Activated B cell treated with CpG ODN at 0.5 μM for 24 hours (primary cell): ENCODE measurements at regions of chr7 and their contacts with region 1.

Region 1: DNA sequence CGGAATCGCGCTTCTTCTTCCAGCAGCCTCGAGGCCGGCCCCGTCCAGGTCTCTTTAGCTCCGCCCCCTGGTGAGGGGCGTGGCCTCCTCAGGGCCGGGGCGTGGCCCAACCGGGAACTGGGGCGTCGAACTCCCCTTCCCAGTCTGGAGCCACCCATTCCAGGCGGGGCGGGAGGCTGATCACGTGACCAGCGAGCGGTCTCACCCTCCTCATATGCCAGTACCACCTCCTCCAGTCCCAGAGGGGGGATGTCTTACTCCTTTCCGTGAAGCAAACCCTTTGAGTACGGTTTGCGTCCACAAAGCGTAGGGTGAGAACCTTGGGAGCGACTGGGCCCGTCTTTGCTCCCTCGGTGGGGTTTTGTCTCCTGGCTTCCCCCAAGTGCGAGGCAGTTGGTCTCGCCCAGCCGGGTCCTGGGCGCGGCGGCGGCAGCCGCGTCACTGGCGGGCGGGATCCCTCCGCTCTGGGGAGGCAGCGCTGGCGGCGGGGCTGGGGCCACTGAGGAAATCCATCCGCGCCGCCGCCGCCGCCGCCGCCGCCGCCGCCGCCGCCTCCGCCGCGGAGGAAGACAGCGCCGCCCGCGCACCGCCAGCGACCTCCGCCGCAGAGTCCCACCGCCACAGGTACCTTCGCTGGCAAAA is at the start of gene GNB2:
- DNase-seq: peak; percentile 99
- ATAC-seq: peak; percentile 67
- H3K4me3 Mint-ChIP-seq: peak within 1 kb of the TSS; percentile 97
- H3K27ac Mint-ChIP-seq: peak within 1 kb of the TSS; percentile 95
- H3K4me1 Mint-ChIP-seq: peaks cover 11% of the 10 kb centered on the region
- H3K27me3 Mint-ChIP-seq: no peaks in the 10 kb centered on the region
- CTCF ChIP-seq: no peak
- total RNA-seq, gene GNB2: 129 and 132 TPM in 2 replicates

Region 2: DNA sequence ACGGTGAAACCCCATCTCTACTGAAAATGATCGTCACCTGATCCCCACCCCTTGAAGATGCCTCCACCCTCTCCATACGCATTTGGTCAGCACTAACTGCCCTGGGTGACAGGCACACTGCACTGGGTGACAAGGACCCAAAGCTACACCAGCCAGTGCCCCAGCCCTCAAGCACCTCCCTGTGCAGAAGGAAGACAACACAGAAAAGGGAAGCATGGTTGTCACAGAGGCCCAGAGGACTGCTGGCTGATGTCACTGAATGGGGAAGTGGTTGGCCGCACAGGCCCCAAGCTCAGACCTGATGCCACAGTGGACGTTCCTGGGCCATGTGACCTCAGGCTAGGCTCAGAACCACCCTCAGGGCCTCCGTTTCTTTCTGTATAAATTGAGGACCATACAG is 304.3 kb before region 1 on chr7:
- CTCF ChIA-PET with region 1: no interaction called
- POLR2A ChIA-PET with region 1: no interaction called
- intact Hi-C with region 1: loop called (anchors 1 kb)
- DNase-seq: peak; percentile 69
- ATAC-seq: peak; percentile 80
- H3K4me3 Mint-ChIP-seq: peak overlapping the region; percentile 44
- H3K27ac Mint-ChIP-seq: peak overlapping the region; percentile 91
- H3K4me1 Mint-ChIP-seq: peaks cover 92% of the 10 kb centered on the region
- H3K27me3 Mint-ChIP-seq: no peaks in the 10 kb centered on the region
- CTCF ChIP-seq: no peak

Region 3: DNA sequence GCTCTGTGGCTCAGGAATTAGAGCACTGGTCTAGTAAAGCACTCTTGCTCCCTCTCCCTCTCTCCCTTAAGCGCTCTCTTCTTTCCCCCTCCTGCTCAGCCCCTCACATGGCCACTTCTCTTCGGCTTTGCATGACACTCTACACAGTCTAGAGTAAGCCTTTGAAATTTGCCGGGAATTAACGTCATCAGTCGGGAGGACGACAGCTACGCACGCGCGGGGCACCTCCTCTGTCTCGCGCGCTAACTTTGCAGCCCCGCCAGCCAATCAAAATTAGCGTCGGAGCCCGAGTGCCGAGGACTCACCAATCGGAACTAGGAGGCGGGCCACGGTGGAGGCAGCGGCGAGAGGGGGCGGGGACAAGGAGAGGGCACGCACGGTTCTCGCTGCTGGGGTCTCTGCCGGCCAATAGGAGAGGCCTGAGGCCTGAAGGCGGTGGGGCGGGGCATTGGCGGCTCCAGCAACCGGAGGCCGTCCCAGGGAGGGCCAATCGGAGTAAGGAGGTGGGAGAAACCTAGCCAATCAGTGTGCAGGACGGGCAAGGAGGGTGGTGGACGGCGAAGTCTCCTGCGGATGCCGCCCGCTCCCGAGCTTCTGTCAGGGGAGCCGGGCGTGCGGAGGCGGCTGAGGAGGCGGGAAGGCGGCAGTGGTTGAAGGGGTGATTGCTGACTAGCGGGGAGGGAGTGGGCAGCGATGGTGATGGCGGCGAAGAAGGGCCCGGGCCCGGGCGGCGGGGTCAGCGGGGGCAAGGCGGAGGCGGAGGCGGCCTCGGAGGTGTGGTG is 134.6 kb before region 1 on chr7 and contains the start of gene AGFG2:
- CTCF ChIA-PET with region 1: no interaction called
- POLR2A ChIA-PET with region 1: no interaction called
- intact Hi-C with region 1: loop called (anchors 1 kb)
- DNase-seq: peak; percentile 97
- ATAC-seq: peak; percentile 98
- H3K4me3 Mint-ChIP-seq: peak within 1 kb of the TSS; percentile 100
- H3K27ac Mint-ChIP-seq: peak within 1 kb of the TSS; percentile 87
- H3K4me1 Mint-ChIP-seq: peaks cover 32% of the 10 kb centered on the region
- H3K27me3 Mint-ChIP-seq: no peaks in the 10 kb centered on the region
- CTCF ChIP-seq: no peak
- total RNA-seq, gene AGFG2: 9.5 and 10.8 TPM in 2 replicates

Region 4: GRCh38 chr7:100611974-100612729 is 61.3 kb before region 1 on chr7 and contains the start of gene MOSPD3:
- CTCF ChIA-PET with region 1: interaction called, 3 read pairs
- POLR2A ChIA-PET with region 1: interaction called, 10 read pairs
- intact Hi-C with region 1: no loop called
- DNase-seq: peak; percentile 99
- ATAC-seq: peak; percentile 91
- H3K4me3 Mint-ChIP-seq: peak within 1 kb of the TSS; percentile 99
- H3K27ac Mint-ChIP-seq: peak within 1 kb of the TSS; percentile 100
- H3K4me1 Mint-ChIP-seq: peaks cover 19% of the 10 kb centered on the region
- H3K27me3 Mint-ChIP-seq: no peaks in the 10 kb centered on the region
- CTCF ChIP-seq: no peak
- total RNA-seq, gene MOSPD3: 10.5 and 11.9 TPM in 2 replicates

Region 5: DNA sequence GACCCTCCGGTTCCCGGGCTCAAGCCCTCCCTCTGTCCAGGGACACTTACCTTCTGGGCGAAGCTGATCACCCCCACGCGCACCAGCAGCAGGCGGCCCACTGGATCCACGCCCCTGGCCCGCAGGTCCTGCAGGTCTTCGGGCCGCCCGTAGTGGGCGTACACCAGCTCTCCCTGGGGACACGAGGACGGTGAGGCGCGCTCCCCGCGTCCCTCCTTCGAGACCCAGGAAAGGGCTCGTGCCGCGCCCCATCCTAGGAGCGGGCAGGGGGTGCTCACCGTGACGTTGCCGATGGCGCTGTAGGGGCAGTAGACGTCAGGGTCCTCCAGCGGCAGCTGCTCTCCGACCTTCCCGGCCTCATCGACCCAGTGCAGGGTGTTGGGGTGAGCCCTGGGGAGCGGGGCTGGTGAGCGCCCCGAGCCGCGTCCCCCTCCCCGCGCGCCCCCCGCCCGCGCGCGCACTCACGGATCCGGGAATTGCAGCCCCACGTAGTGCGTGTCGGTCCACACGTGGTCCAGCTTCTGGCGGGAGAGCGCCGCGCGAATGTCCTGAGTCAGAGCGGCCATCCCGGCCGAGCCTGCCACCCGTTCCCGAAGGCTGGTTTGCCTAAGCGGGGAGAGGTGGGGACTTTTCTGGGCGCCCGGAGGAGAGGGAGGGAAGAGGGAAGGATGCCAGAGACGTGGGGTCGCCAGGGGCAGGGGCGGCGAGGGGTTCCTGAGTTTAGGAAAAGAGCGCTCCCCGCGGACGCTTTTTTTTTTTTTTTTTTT is 40.3 kb before region 1 on chr7:
- CTCF ChIA-PET with region 1: interaction called, 8 read pairs
- POLR2A ChIA-PET with region 1: interaction called, 8 read pairs
- intact Hi-C with region 1: loop called (anchors 1 kb)
- DNase-seq: peak; percentile 63
- ATAC-seq: peak; percentile 71
- H3K4me3 Mint-ChIP-seq: peak overlapping the region; percentile 89
- H3K27ac Mint-ChIP-seq: peak overlapping the region; percentile 78
- H3K4me1 Mint-ChIP-seq: peaks cover 4% of the 10 kb centered on the region
- H3K27me3 Mint-ChIP-seq: no peaks in the 10 kb centered on the region
- CTCF ChIP-seq: no peak

Region 6: DNA sequence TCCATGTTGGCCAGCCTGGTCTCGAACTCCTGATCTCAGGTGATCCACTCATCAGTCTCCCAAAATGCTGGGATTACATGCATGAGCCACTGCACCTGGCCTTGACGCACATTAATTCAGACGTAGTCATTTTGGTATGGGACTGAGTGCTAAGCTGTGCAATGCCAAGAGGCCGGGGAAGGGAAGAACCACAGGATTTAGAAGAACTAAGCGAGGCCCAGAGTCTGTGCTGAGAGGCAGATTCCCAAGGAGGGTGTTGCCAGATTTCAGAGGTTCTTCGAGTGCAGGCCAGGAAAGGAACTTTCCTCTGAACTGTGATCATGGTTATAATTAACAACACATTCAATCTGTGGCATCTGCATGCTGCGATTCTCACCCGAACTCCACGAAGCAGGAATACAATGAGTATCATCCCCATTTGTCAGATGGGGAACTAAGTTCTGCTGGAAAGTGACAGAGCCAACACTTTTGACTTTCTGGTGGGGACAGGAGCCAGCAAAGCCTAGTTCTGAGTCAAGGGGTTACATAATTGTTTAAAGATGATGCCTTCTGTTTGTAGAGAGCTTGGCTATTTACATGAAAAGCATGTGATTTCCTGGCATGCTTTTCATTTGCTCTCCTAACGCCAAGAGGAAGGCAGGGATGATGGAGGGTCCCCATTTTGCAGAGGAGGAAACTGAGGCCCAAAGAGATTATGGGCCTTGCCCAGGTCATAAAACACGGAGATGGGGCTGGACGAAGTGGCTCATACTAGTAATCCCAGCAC is 53.8 kb after region 1 on chr7:
- CTCF ChIA-PET with region 1: no interaction called
- POLR2A ChIA-PET with region 1: no interaction called
- intact Hi-C with region 1: no loop called
- DNase-seq: no peak
- ATAC-seq: no peak
- H3K4me3 Mint-ChIP-seq: no peak overlapping the region
- H3K27ac Mint-ChIP-seq: no peak overlapping the region
- H3K4me1 Mint-ChIP-seq: peaks cover 5% of the 10 kb centered on the region
- H3K27me3 Mint-ChIP-seq: peaks cover 19% of the 10 kb centered on the region
- CTCF ChIP-seq: no peak